Right lobe of liver (tissue), 6 donors: ENCODE measurements at regions of chr9 and their contacts with region 1.

Region 1: GRCh38 chr9:21812946-21813568 is 10.6 kb downstream of the MTAP start:
- DNase-seq: peak; percentile 67 to 72 (median 69)
- ATAC-seq: peak; percentile 93 to 95 (median 94)
- H3K4me3 ChIP-seq: no peak overlapping the region
- H3K27ac ChIP-seq: no peak overlapping the region
- H3K4me1 ChIP-seq: peaks cover 0 to 8% (median 0%) of the 10 kb centered on the region in 4 donors
- H3K27me3 ChIP-seq: no peaks in the 10 kb centered on the region
- CTCF ChIP-seq: peak; percentile 89 to 96 (median 90)
- POLR2A ChIP-seq: no peak

Region 2: GRCh38 chr9:21102305-21102704 is 710.8 kb before region 1 on chr9:
- intact Hi-C with region 1: no loop called
- DNase-seq: no peak
- ATAC-seq: no peak
- H3K4me3 ChIP-seq: no peak overlapping the region
- H3K27ac ChIP-seq: no peak overlapping the region
- H3K4me1 ChIP-seq: no peaks in the 10 kb centered on the region
- H3K27me3 ChIP-seq: no peaks in the 10 kb centered on the region
- CTCF ChIP-seq: no peak
- POLR2A ChIP-seq: no peak

Region 3: DNA sequence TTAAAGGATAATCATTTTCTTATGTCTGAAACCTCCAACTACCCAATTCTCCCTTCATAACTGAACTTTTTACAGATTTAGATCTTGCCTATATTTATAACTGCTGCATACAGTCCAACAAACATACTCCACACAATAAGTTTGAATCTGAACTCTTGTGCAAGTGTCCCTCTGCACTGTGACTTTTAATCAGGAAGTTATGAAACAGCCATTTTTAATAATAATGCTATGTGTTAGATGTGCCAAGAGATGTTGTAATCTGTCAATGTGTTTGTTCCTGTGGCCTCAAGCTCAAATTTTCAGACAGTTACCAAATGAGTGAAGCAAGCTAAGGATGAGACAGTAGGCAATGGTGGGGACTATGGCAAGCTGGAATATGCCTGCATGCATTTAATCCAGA is 68.2 kb before region 1 on chr9:
- intact Hi-C with region 1: no loop called
- DNase-seq: no peak
- ATAC-seq: peak in 2 of 4 donors; percentile 16 to 52
- H3K4me3 ChIP-seq: no peak overlapping the region
- H3K27ac ChIP-seq: no peak overlapping the region
- H3K4me1 ChIP-seq: no peaks in the 10 kb centered on the region
- H3K27me3 ChIP-seq: no peaks in the 10 kb centered on the region
- CTCF ChIP-seq: no peak
- POLR2A ChIP-seq: no peak

Region 4: DNA sequence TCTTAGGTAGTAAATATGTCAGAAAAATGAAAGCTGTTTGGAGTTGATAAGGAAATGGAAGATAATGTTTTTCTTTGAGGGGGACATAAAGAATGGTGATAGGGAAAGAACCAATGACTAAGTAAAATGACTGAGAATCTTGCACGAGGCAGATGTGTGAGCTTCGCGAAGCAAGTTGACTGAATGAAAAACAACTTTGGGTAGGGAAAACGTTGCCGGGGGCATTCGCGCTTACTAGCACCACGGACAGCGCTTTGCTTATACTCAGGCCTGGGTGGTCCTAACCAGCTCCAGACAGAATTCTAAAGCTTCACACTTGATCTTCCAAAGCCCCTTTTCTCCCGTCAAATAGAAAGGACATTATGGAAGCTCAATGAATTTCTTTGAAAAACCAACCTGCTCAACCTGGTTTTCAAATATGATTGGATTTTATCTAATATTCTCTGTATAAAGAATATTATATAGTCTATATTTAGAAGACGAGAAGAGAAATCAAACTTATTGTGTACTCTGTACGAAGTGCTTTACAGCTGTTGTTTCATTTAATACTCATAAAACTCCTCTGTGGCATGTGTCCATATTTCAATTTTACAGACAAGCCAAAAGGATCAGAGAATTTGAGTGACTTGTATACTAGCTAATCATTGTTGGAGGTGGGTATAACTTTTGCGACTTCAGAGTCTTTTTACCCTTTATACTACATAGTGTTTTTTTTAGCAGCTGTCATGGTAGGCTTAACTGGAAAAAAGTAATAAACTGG is 198.0 kb after region 1 on chr9:
- intact Hi-C with region 1: loop called in 1 of 2 experiments (anchors 5 kb)
- DNase-seq: no peak
- ATAC-seq: no peak
- H3K4me3 ChIP-seq: no peak overlapping the region
- H3K27ac ChIP-seq: no peak overlapping the region
- H3K4me1 ChIP-seq: no peaks in the 10 kb centered on the region
- H3K27me3 ChIP-seq: peaks cover 0 to 12% of the 10 kb centered on the region in 2 donors
- CTCF ChIP-seq: no peak
- POLR2A ChIP-seq: no peak

Region 5: DNA sequence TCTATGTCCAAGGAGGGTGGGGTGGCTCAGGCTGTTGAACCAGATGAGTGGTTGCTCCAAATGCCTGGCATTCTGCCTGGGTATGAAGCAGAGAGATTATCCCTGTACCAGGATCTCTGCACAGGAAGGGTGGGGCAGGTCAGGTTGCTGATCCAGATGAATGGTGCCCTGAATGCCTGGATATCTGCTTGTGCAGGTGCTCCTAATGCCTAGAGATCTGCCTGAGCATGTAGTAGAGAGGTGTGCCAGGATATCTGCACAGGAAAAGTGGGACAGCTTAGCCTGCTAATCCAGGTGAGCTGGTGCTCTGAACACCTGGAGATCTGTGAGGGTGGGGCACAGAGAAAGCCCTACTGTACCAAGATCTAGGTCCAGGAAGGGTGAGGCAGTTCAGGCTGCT is 444.0 kb after region 1 on chr9:
- intact Hi-C with region 1: loop called in 1 of 2 experiments (anchors 10 kb)
- DNase-seq: no peak
- ATAC-seq: no peak
- H3K4me3 ChIP-seq: no peak overlapping the region
- H3K27ac ChIP-seq: no peak overlapping the region
- H3K4me1 ChIP-seq: no peaks in the 10 kb centered on the region
- H3K27me3 ChIP-seq: no peaks in the 10 kb centered on the region
- CTCF ChIP-seq: no peak
- POLR2A ChIP-seq: no peak